CD4-positive, alpha-beta T cell (primary cell): ENCODE measurements at regions of chr19 and their contacts with region 1.

Region 1: DNA sequence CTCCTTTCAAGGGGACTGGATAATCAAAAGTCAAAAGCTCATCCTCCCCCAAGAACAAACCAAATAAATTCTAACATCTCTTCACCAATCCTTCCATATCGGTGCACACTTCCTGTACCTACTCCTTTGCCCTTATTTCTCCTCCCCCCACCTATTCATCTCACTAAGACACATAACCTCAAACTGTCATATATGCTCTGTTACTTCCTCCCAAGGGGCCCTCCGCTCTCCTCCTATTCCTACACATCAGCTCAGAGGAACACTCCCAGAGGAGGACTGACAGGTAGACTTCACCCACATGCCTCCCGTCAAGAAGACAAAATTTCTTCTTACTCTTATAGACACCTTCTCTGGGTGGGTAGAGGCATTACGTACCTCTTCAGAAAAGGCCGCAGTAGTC is 48.1 kb downstream of the ZNF93 start:
- DNase-seq: no peak
- ATAC-seq: no peak
- H3K4me3 ChIP-seq: no peak overlapping the region
- H3K4me3 Mint-ChIP-seq: no peak overlapping the region
- H3K27ac ChIP-seq: no peak overlapping the region
- H3K27ac Mint-ChIP-seq: no peak overlapping the region
- H3K4me1 ChIP-seq: no peaks in the 10 kb centered on the region
- H3K4me1 Mint-ChIP-seq: no peaks in the 10 kb centered on the region
- H3K27me3 ChIP-seq: peaks cover 0 to 8% of the 10 kb centered on the region in 2 experiments
- H3K27me3 Mint-ChIP-seq: peaks cover 5% of the 10 kb centered on the region
- CTCF ChIP-seq: no peak

Region 2: DNA sequence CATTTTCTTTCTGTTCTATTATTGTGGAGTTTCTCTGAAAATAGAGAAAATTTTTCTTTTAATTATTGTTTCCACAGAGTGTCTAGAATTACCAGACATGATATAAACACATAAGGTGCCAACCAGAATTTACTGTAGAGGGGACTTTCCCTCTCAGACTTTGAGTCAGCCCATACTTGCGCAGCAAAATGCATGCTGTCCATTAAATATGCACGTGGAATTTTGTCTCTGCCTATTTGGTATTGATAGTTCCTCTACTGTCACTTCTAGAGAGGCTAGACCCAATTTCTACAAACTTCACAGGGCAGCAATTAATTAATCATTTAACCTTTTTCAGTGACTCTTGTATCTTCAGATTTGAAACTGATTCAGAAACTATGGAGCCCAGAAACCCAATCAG is 39.1 kb before region 1 on chr19:
- CTCF ChIA-PET with region 1: no interaction called
- POLR2A ChIA-PET with region 1: no interaction called
- intact Hi-C with region 1: loop called in 1 of 2 experiments (anchors 5 kb)
- DNase-seq: no peak
- ATAC-seq: no peak
- H3K4me3 ChIP-seq: no peak overlapping the region
- H3K4me3 Mint-ChIP-seq: no peak overlapping the region
- H3K27ac ChIP-seq: no peak overlapping the region
- H3K27ac Mint-ChIP-seq: no peak overlapping the region
- H3K4me1 ChIP-seq: no peaks in the 10 kb centered on the region
- H3K4me1 Mint-ChIP-seq: peaks cover 30% of the 10 kb centered on the region
- H3K27me3 ChIP-seq: no peaks in the 10 kb centered on the region
- H3K27me3 Mint-ChIP-seq: no peaks in the 10 kb centered on the region
- CTCF ChIP-seq: no peak